Heart right ventricle (tissue), 16 donors: ENCODE measurements at regions of chr18 and their contacts with region 1.

Region 1: DNA sequence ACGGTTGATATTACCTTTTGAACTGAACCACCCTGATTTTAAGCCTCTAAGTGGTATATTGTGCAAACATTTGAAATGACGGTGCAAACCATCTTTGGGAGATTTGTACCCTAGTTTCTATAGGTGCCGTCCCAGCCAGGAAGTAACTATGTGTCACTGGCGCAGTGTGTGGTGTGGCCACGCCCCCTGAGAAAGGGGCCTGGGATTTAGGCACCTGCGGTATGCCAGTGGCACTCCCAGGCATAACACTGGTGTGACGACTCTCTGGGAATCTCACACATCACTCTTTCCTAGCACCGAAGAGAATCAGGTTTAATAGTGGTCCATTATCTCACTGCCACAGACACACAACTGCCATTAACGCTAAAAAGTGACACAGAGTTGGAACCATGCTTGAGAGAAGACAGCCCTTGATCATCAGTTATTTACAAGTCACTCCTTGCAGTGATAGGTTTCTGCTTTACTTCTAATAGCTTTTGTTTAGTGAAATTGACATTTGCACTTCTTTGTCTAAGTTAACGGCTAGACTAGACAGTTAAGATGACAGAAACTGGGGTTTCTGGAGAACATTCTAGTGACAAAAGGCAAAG is 11.1 kb downstream of the AQP4 start:
- DNase-seq: no peak
- ATAC-seq: no peak
- H3K4me3 ChIP-seq: no peak overlapping the region
- H3K27ac ChIP-seq: no peak overlapping the region
- H3K4me1 ChIP-seq: no peaks in the 10 kb centered on the region
- H3K27me3 ChIP-seq: no peaks in the 10 kb centered on the region
- CTCF ChIP-seq: no peak

Region 2: GRCh38 chr18:26792661-26793060 is 61.7 kb before region 1 on chr18:
- intact Hi-C with region 1: loop called in 2 of 10 experiments (anchors 10 kb)
- DNase-seq: no peak
- ATAC-seq: no peak
- H3K4me3 ChIP-seq: no peak overlapping the region
- H3K27ac ChIP-seq: no peak overlapping the region
- H3K4me1 ChIP-seq: no peaks in the 10 kb centered on the region
- H3K27me3 ChIP-seq: no peaks in the 10 kb centered on the region
- CTCF ChIP-seq: no peak